Spleen (tissue), 13 donors: ENCODE measurements at regions of chr12 and their contacts with region 1.

Region 1: GRCh38 chr12:9750276-9751203 is 10.2 kb downstream of the CD69 start:
- DNase-seq: peak; percentile 81
- H3K4me3 ChIP-seq: peak overlapping the region in 4 of 8 donors; percentile 1 to 36 (median 5)
- H3K27ac ChIP-seq: peak overlapping the region in 6 of 8 donors; percentile 6 to 61 (median 44)
- H3K4me1 ChIP-seq: peaks cover 9 to 72% (median 36%) of the 10 kb centered on the region in 6 donors
- H3K27me3 ChIP-seq: no peaks in the 10 kb centered on the region
- CTCF ChIP-seq: peak; percentile 62 to 87 (median 82)
- POLR2A ChIP-seq: no peak

Region 2: DNA sequence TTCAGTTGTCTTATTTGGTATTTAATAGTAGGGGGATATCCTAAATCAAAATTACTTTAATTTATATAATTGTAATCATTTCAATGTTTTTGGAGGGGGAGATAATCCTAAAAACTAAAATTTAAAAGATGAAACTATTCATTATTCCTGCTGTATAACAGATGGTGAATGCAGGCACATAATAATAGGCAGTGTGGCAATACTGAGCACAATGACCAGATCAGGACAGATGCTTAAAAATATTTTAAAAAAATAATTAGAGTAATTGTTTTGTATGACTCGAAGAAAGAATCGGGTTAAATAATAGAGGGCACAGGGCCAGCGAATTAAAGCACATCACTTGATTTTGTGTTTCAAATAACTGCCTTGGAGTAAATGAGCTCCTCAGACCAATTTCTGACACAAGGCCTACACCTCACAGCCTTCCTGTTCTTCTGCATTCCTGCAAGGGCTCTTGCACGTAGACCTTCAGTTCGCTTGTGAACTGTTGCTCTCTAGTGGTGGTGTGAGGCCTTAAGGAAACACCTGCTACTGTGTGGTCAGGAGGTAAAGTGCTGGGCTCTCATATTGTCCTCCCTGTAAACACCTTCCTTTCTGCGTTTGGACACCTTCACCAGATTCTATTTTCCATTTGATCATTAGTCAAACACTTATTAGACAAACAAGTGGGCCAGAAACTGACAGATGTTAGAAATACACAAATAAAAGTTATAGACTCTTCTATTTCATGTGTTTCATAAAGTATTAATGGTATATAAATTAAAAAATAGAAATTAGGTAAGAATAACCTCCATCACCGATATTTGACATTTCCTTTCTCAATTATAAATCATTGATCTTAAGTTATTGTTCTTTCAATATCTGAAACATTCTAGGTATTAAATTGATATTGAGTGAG is 47.4 kb after region 1 on chr12:
- intact Hi-C with region 1: loop called (anchors 5 kb)
- DNase-seq: peak; percentile 61
- H3K4me3 ChIP-seq: no peak overlapping the region
- H3K27ac ChIP-seq: peak overlapping the region in 1 of 8 donors; percentile 6
- H3K4me1 ChIP-seq: peaks cover 5 to 55% (median 36%) of the 10 kb centered on the region in 6 donors
- H3K27me3 ChIP-seq: no peaks in the 10 kb centered on the region
- CTCF ChIP-seq: peak; percentile 35 to 76 (median 67)
- POLR2A ChIP-seq: no peak

Region 3: DNA sequence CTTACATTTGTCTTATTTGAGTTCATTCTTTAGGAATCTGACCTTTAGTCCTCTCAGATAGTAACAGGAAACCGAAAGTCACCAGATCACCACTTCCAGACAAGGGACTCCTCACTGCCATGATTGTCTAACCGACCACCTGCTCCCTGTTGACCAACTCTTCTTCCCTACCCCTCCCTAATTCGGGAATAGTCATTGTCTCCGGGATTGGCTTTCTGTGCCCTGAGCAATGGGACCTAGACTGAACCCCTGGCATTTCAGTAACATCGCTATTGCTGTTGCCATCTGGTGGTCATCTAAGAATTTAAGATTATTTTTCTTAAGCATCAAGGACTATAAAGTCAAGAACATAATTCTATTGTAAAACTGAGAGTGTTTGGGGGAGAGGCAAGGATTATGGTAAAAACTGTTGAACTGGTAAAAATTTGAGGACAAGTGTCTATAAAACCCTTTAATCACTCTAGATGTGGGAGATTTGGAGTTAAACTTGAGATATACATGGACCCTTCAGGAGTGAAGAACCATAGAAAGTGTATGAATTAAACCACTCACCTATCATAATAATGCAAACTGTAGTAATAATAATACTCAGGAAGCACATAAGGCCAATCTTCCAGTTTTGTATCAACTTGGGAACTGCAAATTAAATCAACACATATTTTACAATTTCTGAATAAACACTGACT is 175.3 kb after region 1 on chr12:
- intact Hi-C with region 1: loop called (anchors 2 kb)
- DNase-seq: no peak
- H3K4me3 ChIP-seq: peak overlapping the region in 2 of 8 donors; percentile 3 to 49
- H3K27ac ChIP-seq: no peak overlapping the region
- H3K4me1 ChIP-seq: peaks cover 0 to 10% (median 0%) of the 10 kb centered on the region in 6 donors
- H3K27me3 ChIP-seq: no peaks in the 10 kb centered on the region
- CTCF ChIP-seq: peak in 9 of 11 experiments; percentile 11 to 62 (median 48)
- POLR2A ChIP-seq: no peak